ENCODE measurements at regions of chr16 and their contacts with region 1.

Region 1: GRCh38 chr16:20741554-20742285 is at the start of gene THUMPD1:
- DNase-seq: peak; percentile 94
- ATAC-seq: peak; percentile 97
- H3K4me3 ChIP-seq: peak within 1 kb of the TSS; percentile 92
- H3K27ac ChIP-seq: peak within 1 kb of the TSS; percentile 92
- H3K4me1 ChIP-seq: peaks cover 2% of the 10 kb centered on the region
- H3K27me3 ChIP-seq: no peaks in the 10 kb centered on the region
- CTCF ChIP-seq: 0 out of 2 replicates have a peak, but pooled peaks have one; percentile 13
- POLR2A ChIP-seq: peak; percentile 68; the same call in 1 of the 2 replicates
- RAD21 ChIP-seq: no peak
- total RNA-seq, gene THUMPD1: 99.4 and 109 TPM in 2 replicates

Region 2: DNA sequence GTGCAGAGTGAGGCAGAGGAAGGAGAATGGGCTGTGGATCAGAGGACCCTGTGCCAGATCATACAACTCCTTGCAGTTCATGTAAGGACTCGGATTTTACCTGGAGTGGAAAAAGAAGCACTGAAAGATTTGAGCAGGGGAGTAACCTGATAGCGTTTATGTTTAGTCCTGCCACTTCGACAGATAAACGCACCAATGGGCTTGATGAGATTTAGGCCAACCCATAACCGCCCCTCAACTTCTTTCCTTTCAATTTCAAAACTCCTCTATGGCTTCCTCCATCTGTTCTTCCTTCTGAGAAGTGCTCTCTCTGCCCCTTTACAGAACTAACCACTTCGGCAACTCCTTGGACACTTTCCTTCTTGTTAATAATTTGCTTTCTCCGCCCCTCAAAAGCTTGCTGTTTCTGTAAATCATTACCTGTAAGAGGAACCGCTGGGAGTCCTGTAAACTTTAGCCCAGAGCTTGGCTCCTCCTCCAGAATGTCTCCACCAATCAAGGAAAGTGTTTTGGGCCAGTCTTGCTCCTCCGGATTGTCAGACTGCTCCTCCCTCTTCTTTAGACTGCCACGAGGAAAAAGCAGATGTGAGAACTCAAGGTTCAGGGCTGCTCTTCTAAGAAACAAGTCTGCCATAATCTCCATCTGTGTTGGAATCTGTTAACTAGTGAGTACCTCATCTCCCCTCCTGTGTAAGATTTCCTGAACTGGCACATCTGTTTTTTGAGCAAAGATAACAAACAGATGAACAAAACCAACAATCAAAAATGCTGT is 21.9 kb after region 1 on chr16 and contains the start of gene ACSM3:
- CTCF ChIA-PET with region 1: no interaction called
- POLR2A ChIA-PET with region 1: no interaction called
- dilution Hi-C with region 1: no loop called
- in situ Hi-C with region 1: no loop called
- intact Hi-C with region 1: loop called (anchors 1 kb)
- DNase-seq: peak; percentile 76
- ATAC-seq: peak; percentile 100
- H3K4me3 ChIP-seq: peak within 1 kb of the TSS; percentile 56
- H3K27ac ChIP-seq: no peak within 1 kb of the TSS
- H3K4me1 ChIP-seq: no peaks in the 10 kb centered on the region
- H3K27me3 ChIP-seq: no peaks in the 10 kb centered on the region
- CTCF ChIP-seq: no peak
- POLR2A ChIP-seq: no peak
- RAD21 ChIP-seq: no peak
- total RNA-seq, gene ACSM3: 0.54 and 0.56 TPM in 2 replicates